ENCODE measurements at regions of chr5 and their contacts with region 1.

Region 1: DNA sequence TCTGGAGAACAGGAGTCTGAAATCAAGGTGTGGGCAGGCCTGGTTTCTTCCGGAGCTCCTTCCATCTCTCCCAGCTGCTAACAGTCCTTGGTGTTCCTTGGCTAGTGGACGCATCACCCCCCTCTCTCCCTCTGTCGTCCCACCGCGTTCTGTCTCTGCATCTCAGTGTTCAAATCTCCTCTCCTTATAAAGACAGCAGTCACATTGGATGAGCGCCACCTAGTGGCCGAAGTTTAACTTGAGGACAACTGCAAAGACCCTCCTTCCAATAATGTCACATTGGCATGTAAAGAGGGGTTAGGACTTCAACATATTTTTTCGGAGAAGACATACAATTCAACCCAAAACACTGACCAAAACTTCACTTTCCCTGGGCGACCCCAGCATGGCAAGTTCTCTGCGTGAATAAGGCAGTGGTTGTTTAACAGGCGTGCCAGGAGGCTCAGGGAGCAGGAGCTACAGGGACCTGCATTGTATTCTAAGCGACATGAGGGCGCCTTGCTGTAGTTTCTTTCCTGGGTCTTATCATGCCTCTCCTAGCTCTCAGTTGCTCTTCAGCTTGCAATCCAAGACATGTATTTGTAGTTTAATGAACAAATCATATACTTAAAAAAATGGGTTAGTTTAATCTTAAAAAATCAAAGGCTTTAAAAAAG is 27.9 kb upstream of the BASP1 start:
- DNase-seq: no peak
- H3K4me3 ChIP-seq: no peak overlapping the region
- CTCF ChIP-seq: peak; percentile 66

Region 2: DNA sequence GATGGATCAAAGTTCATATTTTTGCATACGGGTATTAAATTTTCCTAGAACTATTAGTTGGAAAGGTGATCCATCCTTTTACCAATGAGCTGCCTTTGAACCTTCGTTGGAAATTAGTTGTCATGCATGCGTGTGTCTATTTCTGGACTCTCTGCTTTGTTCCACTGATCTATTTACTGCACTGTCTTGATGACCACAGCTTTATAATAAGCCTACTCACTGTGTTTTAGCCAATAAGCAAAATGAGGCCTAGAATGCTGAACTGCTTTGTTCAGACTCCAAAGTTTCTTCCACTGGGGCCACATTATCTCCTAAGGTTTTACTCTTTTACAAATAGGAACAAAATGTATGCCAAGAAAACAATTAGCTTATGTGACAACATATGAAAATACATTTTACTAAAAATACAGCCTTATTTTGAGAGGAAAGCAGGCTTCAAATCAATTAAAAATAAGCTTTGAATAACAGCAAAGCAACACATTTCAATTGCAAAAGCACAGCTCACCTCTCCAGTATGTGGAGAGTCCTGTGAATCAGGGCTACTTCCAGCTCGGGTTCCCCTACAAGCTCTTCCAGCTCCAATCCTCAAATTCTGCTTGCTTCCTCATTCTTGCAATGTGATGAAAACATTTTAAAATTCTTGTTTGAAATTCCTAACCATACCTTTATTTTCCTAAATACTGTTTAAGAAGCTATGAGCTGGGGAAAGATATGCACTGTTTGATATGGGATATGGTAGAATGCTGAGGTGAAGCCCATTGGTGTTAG is 644.7 kb before region 1 on chr5:
- CTCF ChIA-PET with region 1: interaction called, 11 read pairs
- POLR2A ChIA-PET with region 1: no interaction called
- DNase-seq: no peak
- H3K4me3 ChIP-seq: no peak overlapping the region
- CTCF ChIP-seq: no peak

Region 3: DNA sequence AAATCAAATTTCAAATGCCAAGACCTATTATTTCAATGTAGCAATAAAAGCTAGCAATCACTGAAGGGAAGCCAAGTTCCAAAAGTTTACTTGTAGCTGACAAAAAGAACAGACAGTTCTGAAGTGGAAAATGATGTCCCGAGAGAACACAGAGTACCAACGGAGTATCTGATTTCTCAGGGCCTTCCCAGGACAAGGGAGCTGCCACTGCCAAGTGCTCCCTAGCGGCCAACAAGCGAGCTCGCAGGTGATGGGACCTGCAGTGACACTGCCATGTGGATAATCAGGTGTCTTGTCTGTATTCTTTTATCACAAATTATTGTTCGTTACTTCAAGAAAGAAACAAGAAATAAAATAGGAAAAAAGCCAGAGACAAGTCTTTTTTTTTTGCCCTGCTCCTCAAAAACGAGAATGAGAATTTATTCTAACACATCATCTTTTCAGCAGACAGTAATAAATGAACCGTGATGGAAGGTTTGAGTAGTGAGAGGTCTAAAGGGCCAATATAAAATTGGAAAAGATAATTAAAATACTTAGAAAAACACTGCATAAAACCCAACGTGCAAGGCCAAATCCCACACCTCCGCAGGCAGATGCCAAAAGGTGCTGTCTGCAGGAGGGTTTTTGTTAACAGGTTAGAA is 412.8 kb before region 1 on chr5:
- CTCF ChIA-PET with region 1: interaction called, 24 read pairs
- POLR2A ChIA-PET with region 1: no interaction called
- DNase-seq: no peak
- H3K4me3 ChIP-seq: no peak overlapping the region
- CTCF ChIP-seq: no peak

Region 4: GRCh38 chr5:16826379-16827125 is 363.0 kb before region 1 on chr5:
- CTCF ChIA-PET with region 1: interaction called, 12 read pairs
- POLR2A ChIA-PET with region 1: no interaction called
- DNase-seq: no peak
- H3K4me3 ChIP-seq: no peak overlapping the region
- CTCF ChIP-seq: no peak

Region 5: GRCh38 chr5:16869821-16870796 is 319.4 kb before region 1 on chr5:
- CTCF ChIA-PET with region 1: interaction called, 10 read pairs
- POLR2A ChIA-PET with region 1: no interaction called
- DNase-seq: no peak
- H3K4me3 ChIP-seq: no peak overlapping the region
- CTCF ChIP-seq: no peak

Region 6: GRCh38 chr5:16944816-16945562 is 244.5 kb before region 1 on chr5:
- CTCF ChIA-PET with region 1: interaction called, 12 read pairs
- POLR2A ChIA-PET with region 1: no interaction called
- DNase-seq: no peak
- H3K4me3 ChIP-seq: no peak overlapping the region
- CTCF ChIP-seq: no peak

Region 7: DNA sequence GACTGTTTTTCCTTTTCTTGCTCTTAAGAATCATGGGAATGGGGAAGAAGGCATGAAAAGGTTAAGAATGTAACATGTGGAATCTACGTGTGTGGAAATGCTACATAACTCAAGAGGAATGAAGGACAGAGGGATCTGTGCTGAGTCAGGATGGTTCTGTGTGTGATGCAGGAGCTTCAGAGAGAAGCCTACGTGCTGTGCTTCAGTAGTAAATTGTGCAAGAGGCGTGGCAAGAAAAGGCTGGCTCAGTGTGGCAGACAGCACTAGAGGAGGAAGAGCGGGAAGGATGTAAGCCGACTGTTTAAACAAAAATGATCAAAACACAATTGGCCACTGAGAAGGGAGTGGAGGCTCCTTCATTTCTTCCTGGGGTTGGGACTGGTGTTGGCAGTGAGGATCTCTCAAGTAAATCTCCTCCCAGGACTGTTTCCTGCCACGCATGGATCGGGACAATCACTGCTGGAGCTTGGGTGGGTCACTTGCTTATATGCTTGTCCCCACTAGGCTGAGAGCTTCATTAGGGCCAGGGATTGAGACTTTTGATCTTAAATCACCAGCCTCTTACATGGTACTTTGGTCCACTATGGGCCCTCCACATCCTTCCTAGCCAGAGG is 31.5 kb before region 1 on chr5:
- CTCF ChIA-PET with region 1: interaction called, 23 read pairs
- POLR2A ChIA-PET with region 1: interaction called, 6 read pairs
- DNase-seq: peak; percentile 100
- H3K4me3 ChIP-seq: no peak overlapping the region
- CTCF ChIP-seq: no peak